ENCODE measurements at regions of chr9 and their contacts with region 1.

Region 1: DNA sequence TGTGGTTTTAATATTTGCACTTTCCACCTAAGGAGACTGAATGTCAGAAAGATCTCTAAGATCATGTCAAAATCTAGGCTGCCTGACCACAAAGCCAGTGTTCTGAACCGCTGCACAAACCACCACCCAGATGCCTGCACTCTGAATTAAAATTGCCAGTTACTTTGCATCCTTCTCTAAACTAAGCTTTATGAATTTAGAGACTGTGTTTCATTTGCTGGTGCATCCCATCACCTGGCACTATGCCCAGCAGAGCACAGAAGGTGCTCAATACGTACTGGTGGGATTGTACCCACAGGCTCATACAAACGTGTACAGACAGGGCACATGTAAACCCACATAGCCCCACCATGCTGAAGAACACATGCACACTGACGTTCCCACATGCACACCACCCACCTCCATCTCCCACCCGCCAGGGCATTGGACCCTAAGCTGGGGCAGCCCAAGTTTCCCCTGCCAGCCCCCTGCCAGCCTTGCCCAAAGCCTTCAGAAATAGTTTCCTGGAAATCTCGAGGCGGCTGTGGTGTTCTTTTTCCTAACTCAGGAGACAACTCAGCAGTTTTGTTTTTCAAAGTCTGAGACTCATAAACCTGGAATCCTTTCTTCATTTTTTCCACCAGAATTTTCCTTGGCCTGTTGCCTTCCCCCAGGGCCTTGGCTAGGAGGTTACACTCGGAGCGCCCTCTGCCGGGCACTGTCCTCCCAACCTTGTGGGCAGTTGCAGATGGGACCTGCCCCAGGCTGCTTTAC is 9.6 kb upstream of the TRAF1 start:
- DNase-seq: peak; percentile 86 to 90
- H3K4me3 ChIP-seq: no peak overlapping the region
- H3K4me3 Mint-ChIP-seq: no peak overlapping the region
- H3K27ac Mint-ChIP-seq: no peak overlapping the region
- H3K4me1 ChIP-seq: 0 out of 2 replicates have a peak, but pooled peaks cover 8% of the 10 kb centered on the region
- H3K4me1 Mint-ChIP-seq: peaks cover 10% of the 10 kb centered on the region
- H3K27me3 ChIP-seq: peaks cover 2% of the 10 kb centered on the region; the same call in 1 of the 2 replicates
- H3K27me3 Mint-ChIP-seq: no peaks in the 10 kb centered on the region
- CTCF ChIP-seq: peak; percentile 84 to 96

Region 2: GRCh38 chr9:120619751-120620655 is 316.2 kb before region 1 on chr9:
- CTCF ChIA-PET with region 1: no interaction called
- POLR2A ChIA-PET with region 1: no interaction called
- intact Hi-C with region 1: loop called (anchors 5 kb)
- DNase-seq: peak; percentile 50
- H3K4me3 ChIP-seq: no peak overlapping the region
- H3K4me3 Mint-ChIP-seq: no peak overlapping the region
- H3K27ac Mint-ChIP-seq: no peak overlapping the region
- H3K4me1 ChIP-seq: 0 out of 2 replicates have a peak, but pooled peaks cover 6% of the 10 kb centered on the region
- H3K4me1 Mint-ChIP-seq: peaks cover 22% of the 10 kb centered on the region
- H3K27me3 ChIP-seq: no peaks in the 10 kb centered on the region
- H3K27me3 Mint-ChIP-seq: no peaks in the 10 kb centered on the region
- CTCF ChIP-seq: peak; percentile 80 to 85

Region 3: DNA sequence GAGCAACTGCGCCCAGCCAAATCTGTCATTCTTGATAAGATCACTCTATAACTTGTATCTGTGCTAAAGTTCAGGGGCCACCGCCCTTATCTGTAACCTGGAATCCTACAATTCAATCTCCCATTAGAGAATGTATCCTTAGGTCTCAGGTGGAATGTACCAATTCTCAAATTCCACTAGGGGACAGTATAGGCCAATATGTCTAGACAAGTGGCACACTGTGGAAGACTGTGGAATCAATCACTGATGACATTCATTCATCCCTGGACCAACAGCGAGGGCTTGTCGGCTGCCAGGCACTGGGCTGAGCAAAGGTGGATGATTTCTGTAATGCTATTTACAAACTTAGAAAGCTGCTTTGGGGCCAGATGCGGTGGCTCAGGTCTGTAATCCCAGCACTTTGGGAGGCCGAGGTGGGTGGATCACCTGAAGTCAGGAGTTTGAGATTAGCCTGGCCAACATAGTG is 193.2 kb before region 1 on chr9:
- CTCF ChIA-PET with region 1: no interaction called
- POLR2A ChIA-PET with region 1: no interaction called
- intact Hi-C with region 1: loop called (anchors 1 kb)
- DNase-seq: peak in 1 of 2 experiments; percentile 50
- H3K4me3 ChIP-seq: no peak overlapping the region
- H3K4me3 Mint-ChIP-seq: no peak overlapping the region
- H3K27ac Mint-ChIP-seq: no peak overlapping the region
- H3K4me1 ChIP-seq: no peaks in the 10 kb centered on the region
- H3K4me1 Mint-ChIP-seq: no peaks in the 10 kb centered on the region
- H3K27me3 ChIP-seq: no peaks in the 10 kb centered on the region
- H3K27me3 Mint-ChIP-seq: no peaks in the 10 kb centered on the region
- CTCF ChIP-seq: peak; percentile 67 to 78

Region 4: DNA sequence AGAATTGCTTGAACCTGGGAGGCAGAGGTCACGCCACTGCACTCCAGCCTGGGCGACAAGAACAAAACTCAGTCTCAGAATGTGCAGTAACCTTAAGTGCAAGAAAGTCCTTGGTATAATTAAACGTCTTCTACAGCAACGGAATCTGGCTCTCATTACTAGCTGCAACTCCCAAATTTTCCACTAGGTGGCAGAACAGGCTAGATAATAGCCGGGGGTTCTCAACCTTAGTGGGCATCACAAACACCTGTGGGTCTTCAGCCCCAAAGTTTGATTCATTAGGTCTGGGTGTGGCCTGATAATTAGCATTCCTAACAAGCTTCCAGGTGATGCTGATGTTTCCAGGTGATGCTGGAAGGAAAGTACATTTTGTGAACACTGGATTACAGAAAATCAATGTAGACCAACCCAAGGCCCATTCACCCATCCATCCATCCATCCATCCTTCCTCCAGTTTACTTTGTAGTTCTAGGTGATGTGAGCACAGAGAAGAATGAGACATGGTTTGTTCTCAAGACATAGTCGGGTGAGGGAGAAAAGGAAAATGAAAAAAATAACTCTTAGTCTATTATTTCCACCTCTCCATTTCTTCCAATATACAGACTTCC is 180.3 kb before region 1 on chr9:
- CTCF ChIA-PET with region 1: no interaction called
- POLR2A ChIA-PET with region 1: no interaction called
- intact Hi-C with region 1: loop called (anchors 1 kb)
- DNase-seq: peak; percentile 54 to 76
- H3K4me3 ChIP-seq: no peak overlapping the region
- H3K4me3 Mint-ChIP-seq: no peak overlapping the region
- H3K27ac Mint-ChIP-seq: no peak overlapping the region
- H3K4me1 ChIP-seq: no peaks in the 10 kb centered on the region
- H3K4me1 Mint-ChIP-seq: no peaks in the 10 kb centered on the region
- H3K27me3 ChIP-seq: no peaks in the 10 kb centered on the region
- H3K27me3 Mint-ChIP-seq: no peaks in the 10 kb centered on the region
- CTCF ChIP-seq: peak; percentile 79 to 87

Region 5: GRCh38 chr9:120863833-120864232 is 72.4 kb before region 1 on chr9:
- CTCF ChIA-PET with region 1: no interaction called
- POLR2A ChIA-PET with region 1: no interaction called
- intact Hi-C with region 1: no loop called
- DNase-seq: no peak
- H3K4me3 ChIP-seq: no peak overlapping the region
- H3K4me3 Mint-ChIP-seq: no peak overlapping the region
- H3K27ac Mint-ChIP-seq: no peak overlapping the region
- H3K4me1 ChIP-seq: peaks cover 5% of the 10 kb centered on the region
- H3K4me1 Mint-ChIP-seq: peaks cover 20% of the 10 kb centered on the region
- H3K27me3 ChIP-seq: no peaks in the 10 kb centered on the region
- H3K27me3 Mint-ChIP-seq: no peaks in the 10 kb centered on the region
- CTCF ChIP-seq: no peak

Region 6: GRCh38 chr9:120875954-120876841 is 60.0 kb before region 1 on chr9:
- CTCF ChIA-PET with region 1: no interaction called
- POLR2A ChIA-PET with region 1: no interaction called
- intact Hi-C with region 1: loop called (anchors 2 kb)
- DNase-seq: peak; percentile 85 to 89
- H3K4me3 ChIP-seq: peak overlapping the region; percentile 96
- H3K4me3 Mint-ChIP-seq: peak overlapping the region; percentile 86
- H3K27ac Mint-ChIP-seq: peak overlapping the region; percentile 29
- H3K4me1 ChIP-seq: peaks cover 40% of the 10 kb centered on the region
- H3K4me1 Mint-ChIP-seq: peaks cover 42% of the 10 kb centered on the region
- H3K27me3 ChIP-seq: no peaks in the 10 kb centered on the region
- H3K27me3 Mint-ChIP-seq: peaks cover 2% of the 10 kb centered on the region
- CTCF ChIP-seq: peak in 1 of 2 experiments; percentile 2

Region 7: DNA sequence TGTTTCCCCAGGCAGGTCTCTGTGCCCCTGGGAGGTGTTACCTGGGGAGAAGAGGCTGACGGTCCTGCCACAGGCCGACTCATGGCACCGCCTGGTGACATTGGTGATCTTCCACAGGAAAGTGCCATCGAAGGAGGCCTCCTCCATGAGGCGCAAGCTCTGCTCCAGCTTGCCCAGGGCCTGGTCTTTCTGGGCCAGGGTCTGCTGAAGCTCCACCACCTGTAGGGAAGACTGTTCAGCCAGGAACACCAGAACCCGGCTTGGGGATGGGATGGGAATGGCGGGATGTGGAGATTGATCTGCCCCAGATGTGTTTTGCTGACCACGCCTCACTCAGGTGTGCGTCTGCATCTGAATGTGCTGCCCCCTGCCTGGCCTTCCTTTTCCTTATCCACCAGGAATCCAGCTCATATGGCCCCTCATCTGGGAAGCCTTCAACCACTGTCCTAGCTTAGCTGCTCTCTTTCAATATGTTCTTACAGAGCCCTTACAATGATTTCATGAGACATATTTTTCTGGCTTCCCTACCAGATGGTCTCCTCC is 24.8 kb before region 1 on chr9:
- CTCF ChIA-PET with region 1: no interaction called
- POLR2A ChIA-PET with region 1: no interaction called
- intact Hi-C with region 1: no loop called
- DNase-seq: no peak
- H3K4me3 ChIP-seq: no peak overlapping the region
- H3K4me3 Mint-ChIP-seq: no peak overlapping the region
- H3K27ac Mint-ChIP-seq: no peak overlapping the region
- H3K4me1 ChIP-seq: no peaks in the 10 kb centered on the region
- H3K4me1 Mint-ChIP-seq: no peaks in the 10 kb centered on the region
- H3K27me3 ChIP-seq: no peaks in the 10 kb centered on the region
- H3K27me3 Mint-ChIP-seq: no peaks in the 10 kb centered on the region
- CTCF ChIP-seq: no peak